ENCODE measurements at regions of chr22 and their contacts with region 1.

Region 1: GRCh38 chr22:48838846-48839695 is 988.6 kb downstream of the BRD1 start:
- DNase-seq: no peak
- H3K4me3 ChIP-seq: no peak overlapping the region
- H3K27ac ChIP-seq: no peak overlapping the region
- H3K4me1 ChIP-seq: no peaks in the 10 kb centered on the region
- H3K27me3 ChIP-seq: peaks cover 90% of the 10 kb centered on the region
- CTCF ChIP-seq: no peak

Region 2: GRCh38 chr22:48858121-48858520 is 19.1 kb after region 1 on chr22:
- CTCF ChIA-PET with region 1: no interaction called
- POLR2A ChIA-PET with region 1: interaction called, 19 read pairs
- intact Hi-C with region 1: no loop called
- DNase-seq: no peak
- H3K4me3 ChIP-seq: no peak overlapping the region
- H3K27ac ChIP-seq: no peak overlapping the region
- H3K4me1 ChIP-seq: no peaks in the 10 kb centered on the region
- H3K27me3 ChIP-seq: peaks cover 61% of the 10 kb centered on the region
- CTCF ChIP-seq: no peak